ENCODE measurements at regions of chr15 and their contacts with region 1.

Region 1: GRCh38 chr15:33086507-33087121 is 107.9 kb downstream of the FMN1 start:
- DNase-seq: no peak
- H3K4me3 Mint-ChIP-seq: no peak overlapping the region
- H3K27ac Mint-ChIP-seq: no peak overlapping the region
- H3K4me1 Mint-ChIP-seq: no peaks in the 10 kb centered on the region
- H3K27me3 Mint-ChIP-seq: peaks cover 3% of the 10 kb centered on the region

Region 2: GRCh38 chr15:32923176-32923575 is 163.4 kb before region 1 on chr15:
- CTCF ChIA-PET with region 1: no interaction called
- DNase-seq: no peak
- H3K4me3 Mint-ChIP-seq: no peak overlapping the region
- H3K27ac Mint-ChIP-seq: no peak overlapping the region
- H3K4me1 Mint-ChIP-seq: no peaks in the 10 kb centered on the region
- H3K27me3 Mint-ChIP-seq: no peaks in the 10 kb centered on the region

Region 3: DNA sequence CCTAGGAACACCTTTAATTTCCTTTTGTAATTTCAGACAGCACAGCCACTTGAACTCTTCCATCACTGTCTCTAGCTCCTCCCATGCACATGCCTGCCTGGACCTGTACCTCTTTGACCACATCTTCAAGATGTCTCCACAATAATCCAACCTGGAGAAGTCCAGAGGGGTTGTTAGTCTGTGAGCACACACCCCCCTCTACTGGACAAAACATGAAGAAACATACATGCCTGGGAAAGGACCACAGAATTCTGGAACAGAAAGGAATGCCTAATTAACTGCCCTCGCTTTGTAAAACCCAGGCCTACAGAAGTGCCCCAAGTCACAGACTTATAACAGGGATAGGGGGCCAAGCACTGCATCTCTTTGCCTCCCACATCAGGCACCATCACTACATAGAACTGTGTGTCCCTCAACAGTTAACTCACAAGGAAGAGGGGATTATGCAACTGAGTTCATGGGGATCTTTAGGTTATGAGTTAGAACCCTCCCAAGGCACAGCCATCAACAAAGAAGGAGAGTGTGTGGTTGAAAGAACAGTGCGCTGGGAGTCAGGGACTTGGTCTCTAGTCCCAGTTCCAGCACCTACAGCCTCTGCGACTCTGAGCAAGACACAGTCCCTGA is 46.2 kb after region 1 on chr15:
- CTCF ChIA-PET with region 1: interaction called, 14 read pairs
- DNase-seq: peak; percentile 22
- H3K4me3 Mint-ChIP-seq: no peak overlapping the region
- H3K27ac Mint-ChIP-seq: no peak overlapping the region
- H3K4me1 Mint-ChIP-seq: no peaks in the 10 kb centered on the region
- H3K27me3 Mint-ChIP-seq: no peaks in the 10 kb centered on the region

Region 4: GRCh38 chr15:33188641-33189257 is 102.1 kb after region 1 on chr15:
- CTCF ChIA-PET with region 1: no interaction called
- DNase-seq: no peak
- H3K4me3 Mint-ChIP-seq: no peak overlapping the region
- H3K27ac Mint-ChIP-seq: no peak overlapping the region
- H3K4me1 Mint-ChIP-seq: peaks cover 3% of the 10 kb centered on the region
- H3K27me3 Mint-ChIP-seq: peaks cover 17% of the 10 kb centered on the region

Region 5: GRCh38 chr15:33700695-33701304 is 614.2 kb after region 1 on chr15:
- CTCF ChIA-PET with region 1: interaction called, 10 read pairs
- DNase-seq: peak; percentile 65
- H3K4me3 Mint-ChIP-seq: no peak overlapping the region
- H3K27ac Mint-ChIP-seq: no peak overlapping the region
- H3K4me1 Mint-ChIP-seq: no peaks in the 10 kb centered on the region
- H3K27me3 Mint-ChIP-seq: peaks cover 8% of the 10 kb centered on the region

Measured in activated naive CD4-positive, alpha-beta T cell treated with anti-CD3 and anti-CD28 coated beads, Interleukin-2, amount 10 ng/mL, durations not matched to agents 7 days and 5 days (primary cell).